Activated T-helper 1 cell treated with anti-CD3 and anti-CD28 coated beads, Interleukin-12 subunit alpha, Interleukin-12 subunit beta, Interleukin-2, Interleukin-4 antibody, amounts not matched to agents 30 ng/mL and 10 ng/mL and 1 ng/mL, durations not matched to agents 14 hours and 24 hours and 36 hours (primary cell): ENCODE measurements at regions of chr2 and their contacts with region 1.

Region 1: DNA sequence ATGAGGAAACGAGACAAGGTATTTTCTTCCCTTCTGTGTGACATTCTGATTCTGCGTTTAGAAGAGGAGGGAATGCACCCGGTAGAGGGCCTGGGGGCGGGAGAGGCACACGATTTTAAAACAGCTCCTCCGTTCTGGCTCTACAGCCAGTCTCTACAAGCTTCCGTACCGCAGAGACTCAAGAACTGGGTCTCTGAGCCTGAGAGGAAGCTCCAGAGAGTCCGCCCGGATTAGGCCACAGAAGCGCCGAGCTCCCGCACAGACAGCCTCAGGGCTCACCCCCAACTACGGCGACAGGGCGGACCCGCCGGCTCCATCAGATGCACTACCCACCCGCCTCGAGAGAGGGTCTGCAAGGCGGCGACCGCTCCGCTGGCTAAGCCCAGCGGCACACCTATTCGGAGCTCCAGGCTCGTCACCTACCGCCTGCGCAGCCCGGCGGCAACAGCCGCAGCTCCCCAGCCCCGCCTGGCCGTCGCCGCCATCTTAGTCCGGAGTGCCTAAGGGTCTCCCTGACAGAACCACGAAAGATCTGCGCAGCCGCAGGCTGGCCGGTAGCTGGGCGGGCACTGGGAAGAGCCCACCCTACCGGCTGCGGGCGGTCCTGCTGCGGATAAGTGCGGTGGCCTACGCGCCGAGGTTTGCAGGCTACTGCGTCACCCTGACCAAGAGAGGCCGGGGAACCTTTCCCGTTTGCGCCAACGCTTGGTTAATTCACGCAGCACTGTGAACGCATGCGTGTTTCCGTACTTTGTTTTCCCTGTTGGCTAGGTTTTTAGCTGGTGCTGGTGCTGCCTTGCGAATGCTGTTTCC is at the start of gene NFU1:
- DNase-seq: peak; percentile 79
- H3K4me3 Mint-ChIP-seq: peak within 1 kb of the TSS; percentile 93
- H3K27ac Mint-ChIP-seq: peak within 1 kb of the TSS; percentile 99
- H3K4me1 Mint-ChIP-seq: peaks cover 17% of the 10 kb centered on the region
- H3K27me3 Mint-ChIP-seq: no peaks in the 10 kb centered on the region
- total RNA-seq, gene NFU1: 29.3 and 29.8 TPM in 2 replicates

Region 2: DNA sequence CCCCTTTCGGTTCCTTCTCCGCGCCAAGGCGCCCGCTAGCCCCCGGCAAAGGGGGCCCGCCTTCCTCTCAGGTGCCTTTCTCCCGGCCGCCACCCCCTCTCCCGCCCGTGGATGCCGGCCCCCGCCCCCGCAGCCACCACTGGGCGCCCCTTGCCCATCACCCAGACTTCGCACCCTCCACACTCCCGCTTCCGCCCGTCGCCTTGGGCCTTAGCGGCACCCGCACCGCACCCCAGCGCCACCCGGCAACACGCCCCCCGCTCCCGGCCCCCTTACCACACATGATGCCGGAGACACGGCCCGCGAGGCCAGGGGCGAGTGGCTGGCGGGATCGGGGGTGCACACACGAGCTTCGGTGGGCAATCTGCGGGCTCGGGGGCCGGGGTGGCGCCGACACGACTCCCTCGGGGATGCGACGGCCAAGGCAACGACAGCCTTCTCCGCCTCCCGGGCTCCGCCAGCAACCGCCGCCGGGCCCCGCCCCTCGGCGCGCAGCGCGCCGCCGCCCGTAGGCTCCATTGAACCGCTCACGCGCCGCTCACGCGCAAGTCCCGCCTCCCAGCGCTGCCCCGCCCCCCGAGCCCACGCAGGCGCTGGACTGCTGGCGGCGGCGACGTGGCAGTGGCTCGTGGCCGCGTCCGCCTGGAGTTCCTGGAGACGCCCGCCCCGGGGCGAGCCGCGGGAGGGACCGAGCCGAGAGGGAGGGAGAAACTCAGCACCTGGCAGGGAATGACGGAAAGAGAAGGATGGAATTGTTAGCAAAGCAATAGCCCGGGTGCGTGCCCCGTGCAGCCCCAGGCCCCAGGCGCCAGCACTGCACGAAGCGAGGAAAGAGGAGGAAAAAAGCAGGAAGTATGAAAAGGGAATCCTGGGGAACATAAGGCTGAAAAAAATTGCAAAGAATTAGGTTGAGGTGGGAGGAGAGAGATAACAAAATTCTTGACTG is 50.1 kb before region 1 on chr2 and contains the start of gene GFPT1:
- intact Hi-C with region 1: loop called (anchors 1 kb)
- DNase-seq: peak; percentile 93
- H3K4me3 Mint-ChIP-seq: peak within 1 kb of the TSS; percentile 87
- H3K27ac Mint-ChIP-seq: peak within 1 kb of the TSS; percentile 81
- H3K4me1 Mint-ChIP-seq: peaks cover 46% of the 10 kb centered on the region
- H3K27me3 Mint-ChIP-seq: no peaks in the 10 kb centered on the region
- total RNA-seq, gene GFPT1: 47.3 and 52.3 TPM in 2 replicates

Region 3: GRCh38 chr2:69453475-69454129 is 16.5 kb after region 1 on chr2:
- intact Hi-C with region 1: loop called (anchors 1 kb)
- DNase-seq: no peak
- H3K4me3 Mint-ChIP-seq: no peak overlapping the region
- H3K27ac Mint-ChIP-seq: no peak overlapping the region
- H3K4me1 Mint-ChIP-seq: peaks cover 17% of the 10 kb centered on the region
- H3K27me3 Mint-ChIP-seq: peaks cover 12% of the 10 kb centered on the region

Region 4: GRCh38 chr2:69477627-69478026 is 40.5 kb after region 1 on chr2:
- intact Hi-C with region 1: loop called (anchors 2 kb)
- DNase-seq: no peak
- H3K4me3 Mint-ChIP-seq: no peak overlapping the region
- H3K27ac Mint-ChIP-seq: no peak overlapping the region
- H3K4me1 Mint-ChIP-seq: peaks cover 31% of the 10 kb centered on the region
- H3K27me3 Mint-ChIP-seq: no peaks in the 10 kb centered on the region